Naive thymus-derived CD4-positive, alpha-beta T cell (primary cell): ENCODE measurements at regions of chr1 and their contacts with region 1.

Region 1: GRCh38 chr1:209769171-209769904 is 13.5 kb downstream of the TRAF3IP3 start:
- DNase-seq: peak in 8 of 9 donors; percentile 73 to 85 (median 83)
- ATAC-seq: peak; percentile 80
- H3K4me3 ChIP-seq: peak overlapping the region; percentile 88
- H3K4me3 Mint-ChIP-seq: no peak overlapping the region
- H3K27ac ChIP-seq: peak overlapping the region; percentile 83
- H3K27ac Mint-ChIP-seq: no peak overlapping the region
- H3K4me1 ChIP-seq: peaks cover 44 to 58% of the 10 kb centered on the region in 2 donors
- H3K4me1 Mint-ChIP-seq: peaks cover 31 to 40% (median 35%) of the 10 kb centered on the region in 7 donors
- H3K27me3 ChIP-seq: no peaks in the 10 kb centered on the region
- H3K27me3 Mint-ChIP-seq: no peaks in the 10 kb centered on the region

Region 2: GRCh38 chr1:209723756-209724693 is 45.3 kb before region 1 on chr1:
- CTCF ChIA-PET with region 1: interaction called, 3 read pairs
- POLR2A ChIA-PET with region 1: interaction called, 19 read pairs
- intact Hi-C with region 1: loop called (anchors 1 kb)
- DNase-seq: peak in 7 of 9 donors; percentile 7 to 66 (median 23)
- ATAC-seq: peak; percentile 36
- H3K4me3 ChIP-seq: no peak overlapping the region
- H3K4me3 Mint-ChIP-seq: peak overlapping the region in 9 of 10 donors; percentile 61 to 86 (median 78)
- H3K27ac ChIP-seq: peak overlapping the region; percentile 60
- H3K27ac Mint-ChIP-seq: peak overlapping the region; percentile 74 to 99 (median 93)
- H3K4me1 ChIP-seq: peaks cover 0 to 23% of the 10 kb centered on the region in 2 donors
- H3K4me1 Mint-ChIP-seq: peaks cover 7 to 49% (median 38%) of the 10 kb centered on the region in 7 donors
- H3K27me3 ChIP-seq: no peaks in the 10 kb centered on the region
- H3K27me3 Mint-ChIP-seq: no peaks in the 10 kb centered on the region

Region 3: GRCh38 chr1:209755926-209756614 is 13.3 kb before region 1 on chr1 and contains the start of gene TRAF3IP3:
- CTCF ChIA-PET with region 1: interaction called, 63 read pairs
- POLR2A ChIA-PET with region 1: interaction called, 1,558 read pairs
- intact Hi-C with region 1: loop called (anchors 1 kb)
- DNase-seq: peak; percentile 33 to 86 (median 84)
- ATAC-seq: peak; percentile 97
- H3K4me3 ChIP-seq: peak within 1 kb of the TSS; percentile 91
- H3K4me3 Mint-ChIP-seq: peak within 1 kb of the TSS; percentile 89 to 100 (median 98)
- H3K27ac ChIP-seq: peak within 1 kb of the TSS; percentile 83
- H3K27ac Mint-ChIP-seq: peak within 1 kb of the TSS in 7 of 9 donors; percentile 90 to 99 (median 97)
- H3K4me1 ChIP-seq: peaks cover 63 to 64% of the 10 kb centered on the region in 2 donors
- H3K4me1 Mint-ChIP-seq: peaks cover 68 to 85% (median 78%) of the 10 kb centered on the region in 7 donors
- H3K27me3 ChIP-seq: no peaks in the 10 kb centered on the region
- H3K27me3 Mint-ChIP-seq: no peaks in the 10 kb centered on the region
- total RNA-seq, gene TRAF3IP3: 303 to 746 (median 450) TPM

Region 4: DNA sequence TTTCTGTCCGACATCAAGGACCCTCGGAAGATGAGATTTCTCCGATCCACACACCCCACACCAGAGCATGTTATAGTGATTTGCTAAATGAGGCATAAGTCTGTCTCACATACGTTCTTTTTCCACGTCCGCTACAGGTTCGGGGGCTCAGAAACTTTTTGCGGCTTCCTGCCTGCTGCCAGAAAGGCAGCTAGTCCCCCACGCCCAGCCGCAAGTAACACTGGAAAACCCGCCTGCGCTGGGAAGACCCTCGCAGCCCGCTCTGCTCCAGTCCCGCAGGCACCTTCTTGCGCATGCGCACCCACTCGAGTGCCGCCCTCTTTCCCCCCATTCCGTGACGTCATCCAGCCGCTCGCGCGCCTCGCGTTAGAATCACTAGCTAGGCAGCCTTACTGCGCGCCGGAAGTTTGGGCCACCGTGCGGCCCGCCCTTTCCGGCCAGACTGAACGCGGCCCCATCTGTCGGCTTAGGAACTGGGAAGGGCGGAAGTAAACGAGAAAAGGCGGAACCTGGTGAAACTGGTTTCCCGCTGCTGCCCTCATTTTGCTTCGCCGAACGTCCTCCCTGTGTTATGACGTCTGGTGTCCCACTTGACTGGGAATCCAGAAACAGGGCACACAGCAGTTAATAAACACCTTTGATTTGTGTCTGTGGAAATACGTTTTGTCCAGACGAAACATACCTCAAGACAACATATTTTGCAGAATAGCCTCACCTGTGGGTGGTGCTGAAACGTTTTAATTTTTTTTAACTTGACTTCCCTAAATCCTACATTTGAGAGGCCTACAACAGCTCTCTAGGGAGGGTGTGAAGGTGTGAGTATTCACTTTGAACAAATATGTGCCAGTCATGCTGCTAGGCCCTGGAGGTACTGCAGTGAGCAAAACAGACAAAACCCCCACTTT is 15.2 kb after region 1 on chr1 and contains the start of gene C1orf74:
- CTCF ChIA-PET with region 1: interaction called, 9 read pairs
- POLR2A ChIA-PET with region 1: interaction called, 1,558 read pairs
- intact Hi-C with region 1: loop called (anchors 1 kb)
- DNase-seq: peak; percentile 97 to 100 (median 99)
- ATAC-seq: peak; percentile 99
- H3K4me3 ChIP-seq: peak within 1 kb of the TSS; percentile 65
- H3K4me3 Mint-ChIP-seq: peak within 1 kb of the TSS; percentile 86 to 97 (median 92)
- H3K27ac ChIP-seq: peak within 1 kb of the TSS; percentile 90
- H3K27ac Mint-ChIP-seq: peak within 1 kb of the TSS; percentile 92 to 99 (median 97)
- H3K4me1 ChIP-seq: peaks cover 11 to 19% of the 10 kb centered on the region in 2 donors
- H3K4me1 Mint-ChIP-seq: peaks cover 9 to 63% (median 37%) of the 10 kb centered on the region in 7 donors
- H3K27me3 ChIP-seq: no peaks in the 10 kb centered on the region
- H3K27me3 Mint-ChIP-seq: peaks cover 5 to 9% (median 8%) of the 10 kb centered on the region in 5 donors
- total RNA-seq, gene C1orf74: 0.51 to 1.5 (median 1.3) TPM